Transverse colon (tissue), 4 donors: ENCODE measurements at regions of chr1 and their contacts with region 1.

Region 1: DNA sequence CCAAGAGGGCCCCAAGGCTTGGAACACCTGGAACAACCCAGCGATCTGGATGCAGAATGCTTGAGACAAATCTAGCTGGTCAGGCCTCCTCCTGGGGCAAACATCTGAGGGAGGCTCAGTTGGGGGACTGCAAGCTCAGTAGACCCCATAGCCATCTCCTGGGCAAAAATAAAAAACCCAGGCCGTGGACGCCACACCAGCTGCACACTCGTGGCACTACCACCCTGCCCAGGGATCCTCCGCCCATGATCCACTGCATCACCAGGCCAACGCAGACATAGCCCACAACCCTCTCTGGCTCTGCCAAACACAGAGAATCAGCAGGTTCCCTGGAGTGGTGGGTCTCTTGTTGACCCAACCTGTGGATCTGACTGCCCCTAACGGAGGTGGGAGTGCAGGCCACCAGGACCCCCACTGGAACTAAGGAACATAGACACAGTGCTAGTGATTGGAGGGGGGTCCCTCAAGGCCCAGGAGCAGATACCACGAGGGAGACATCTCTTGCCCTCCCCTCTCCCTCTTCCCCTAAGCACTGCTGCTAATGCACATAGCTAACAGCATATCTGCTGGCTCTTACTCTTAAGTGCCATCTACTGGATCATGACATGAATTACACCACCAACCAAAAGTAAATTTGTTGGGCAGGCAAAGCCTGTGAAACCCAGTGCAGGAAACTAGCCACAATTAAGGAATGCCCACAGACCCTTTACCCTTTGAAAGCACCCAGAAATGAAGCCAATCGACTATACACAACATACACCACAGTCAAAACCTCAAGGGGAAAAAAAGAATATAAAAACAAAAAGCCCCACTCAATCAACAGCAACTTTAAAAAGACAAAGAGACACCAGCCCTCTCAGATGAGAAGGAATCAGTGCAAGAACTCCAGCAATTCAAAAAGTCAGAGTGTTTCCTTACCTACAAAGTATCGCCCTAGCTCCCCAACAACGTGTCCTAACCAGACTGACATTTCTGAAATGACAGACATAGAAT is 147.3 kb downstream of the CHD1L start:
- DNase-seq: no peak
- H3K4me3 ChIP-seq: no peak overlapping the region
- H3K27ac ChIP-seq: no peak overlapping the region
- H3K4me1 ChIP-seq: no peaks in the 10 kb centered on the region
- H3K27me3 ChIP-seq: no peaks in the 10 kb centered on the region
- CTCF ChIP-seq: peak; percentile 53 to 66 (median 62)
- EP300 ChIP-seq: no peak
- POLR2A ChIP-seq: no peak

Region 2: GRCh38 chr1:147273409-147274336 is 116.2 kb before region 1 on chr1:
- in situ Hi-C with region 1: loop called in 2 of 4 experiments (anchors 10 kb)
- intact Hi-C with region 1: no loop called
- DNase-seq: no peak
- H3K4me3 ChIP-seq: no peak overlapping the region
- H3K27ac ChIP-seq: peak overlapping the region; percentile 2 to 38 (median 17)
- H3K4me1 ChIP-seq: peaks cover 0 to 6% (median 3%) of the 10 kb centered on the region in 4 donors
- H3K27me3 ChIP-seq: no peaks in the 10 kb centered on the region
- CTCF ChIP-seq: peak; percentile 29 to 63 (median 56)
- EP300 ChIP-seq: no peak
- POLR2A ChIP-seq: no peak

Region 3: GRCh38 chr1:147472966-147473734 is 83.3 kb after region 1 on chr1:
- in situ Hi-C with region 1: no loop called
- intact Hi-C with region 1: no loop called
- DNase-seq: no peak
- H3K4me3 ChIP-seq: no peak overlapping the region
- H3K27ac ChIP-seq: no peak overlapping the region
- H3K4me1 ChIP-seq: peaks cover 0 to 3% (median 0%) of the 10 kb centered on the region in 4 donors
- H3K27me3 ChIP-seq: no peaks in the 10 kb centered on the region
- CTCF ChIP-seq: no peak
- EP300 ChIP-seq: no peak
- POLR2A ChIP-seq: no peak

Region 4: DNA sequence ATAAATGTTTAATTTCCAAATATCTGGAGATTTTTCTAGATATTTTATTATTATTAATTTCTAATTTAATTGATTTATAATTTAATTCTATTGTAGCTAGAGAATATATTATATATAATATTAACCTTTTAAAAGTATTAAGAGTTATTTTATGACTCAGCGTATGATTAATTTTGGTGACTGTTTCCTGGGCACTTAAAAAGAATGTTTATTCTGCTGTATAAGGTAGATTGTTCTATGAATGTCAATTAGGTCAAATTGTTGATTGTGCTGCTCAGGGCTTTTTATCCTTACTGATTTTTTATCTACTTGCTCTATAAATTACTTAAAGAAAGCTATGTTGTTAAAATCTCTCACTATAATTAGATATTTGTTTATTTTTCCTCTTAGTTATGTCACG is 492.7 kb after region 1 on chr1:
- in situ Hi-C with region 1: no loop called
- intact Hi-C with region 1: no loop called
- DNase-seq: no peak
- H3K4me3 ChIP-seq: no peak overlapping the region
- H3K27ac ChIP-seq: no peak overlapping the region
- H3K4me1 ChIP-seq: no peaks in the 10 kb centered on the region
- H3K27me3 ChIP-seq: no peaks in the 10 kb centered on the region
- CTCF ChIP-seq: no peak
- EP300 ChIP-seq: no peak
- POLR2A ChIP-seq: no peak

Region 5: DNA sequence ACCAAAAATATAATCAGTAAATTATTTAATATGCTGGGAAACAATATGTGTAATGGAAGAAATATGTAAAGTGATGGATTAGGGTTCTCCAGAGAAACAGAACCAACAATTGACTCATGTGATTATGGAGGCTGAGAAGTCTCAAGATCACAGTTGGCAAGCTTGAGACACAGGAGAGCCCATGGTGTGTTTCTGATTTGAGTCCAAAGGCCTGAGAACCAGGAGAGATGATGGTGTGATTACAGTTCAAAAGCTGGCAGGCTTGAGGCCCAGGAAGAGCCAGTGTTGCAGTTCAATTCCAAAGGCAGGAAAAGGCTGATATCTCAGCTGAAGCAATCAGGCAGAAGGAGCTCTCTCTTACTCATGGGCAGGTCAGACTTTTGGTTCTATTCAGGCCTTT is 901.1 kb after region 1 on chr1:
- in situ Hi-C with region 1: no loop called
- intact Hi-C with region 1: no loop called
- DNase-seq: no peak
- H3K4me3 ChIP-seq: no peak overlapping the region
- H3K27ac ChIP-seq: no peak overlapping the region
- H3K4me1 ChIP-seq: no peaks in the 10 kb centered on the region
- H3K27me3 ChIP-seq: no peaks in the 10 kb centered on the region
- CTCF ChIP-seq: no peak
- EP300 ChIP-seq: no peak
- POLR2A ChIP-seq: no peak